ENCODE measurements at regions of chr6 and their contacts with region 1.

Region 1: GRCh38 chr6:89610149-89610642 is 28.4 kb downstream of the LYRM2 start:
- DNase-seq: peak; percentile 72 to 80
- H3K4me3 ChIP-seq: no peak overlapping the region
- H3K27ac ChIP-seq: no peak overlapping the region
- H3K4me1 ChIP-seq: no peaks in the 10 kb centered on the region
- H3K27me3 ChIP-seq: no peaks in the 10 kb centered on the region
- CTCF ChIP-seq: peak in 5 of 7 experiments; percentile 25 to 88 (median 78)
- EP300 ChIP-seq: no peak
- POLR2A ChIP-seq: no peak

Region 2: GRCh38 chr6:89323511-89323971 is 286.7 kb before region 1 on chr6:
- intact Hi-C with region 1: no loop called
- DNase-seq: no peak
- H3K4me3 ChIP-seq: no peak overlapping the region
- H3K27ac ChIP-seq: peak overlapping the region in 3 of 5 donors; percentile 23 to 36 (median 26)
- H3K4me1 ChIP-seq: peaks cover 0 to 29% (median 6%) of the 10 kb centered on the region in 4 donors
- H3K27me3 ChIP-seq: no peaks in the 10 kb centered on the region
- CTCF ChIP-seq: no peak
- EP300 ChIP-seq: no peak
- POLR2A ChIP-seq: no peak

Region 3: DNA sequence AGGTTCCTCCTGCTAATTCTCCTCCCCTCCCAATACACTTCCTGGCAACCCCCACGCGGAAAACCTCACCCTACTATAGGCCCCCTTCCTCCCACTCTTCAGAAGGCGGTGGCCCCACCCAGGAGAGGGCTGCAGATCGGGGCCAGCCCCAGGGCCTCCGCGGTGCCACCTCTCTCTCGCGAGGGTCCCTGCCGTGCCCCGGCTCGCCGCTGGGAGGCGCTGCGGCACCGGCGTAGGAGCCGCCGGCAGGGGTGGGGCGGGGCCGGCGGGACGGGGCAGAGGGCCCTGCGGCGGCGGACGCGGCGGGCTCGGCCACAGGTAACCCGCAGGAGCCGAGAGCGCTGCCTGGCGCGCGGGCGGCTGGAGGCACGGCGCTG is 177.3 kb before region 1 on chr6 and contains the start of gene ANKRD6:
- intact Hi-C with region 1: loop called (anchors 5 kb)
- DNase-seq: peak; percentile 89 to 92
- H3K4me3 ChIP-seq: peak within 1 kb of the TSS; percentile 88 to 93 (median 90)
- H3K27ac ChIP-seq: peak within 1 kb of the TSS in 2 of 5 donors; percentile 54 to 73
- H3K4me1 ChIP-seq: peaks cover 5 to 19% (median 17%) of the 10 kb centered on the region in 4 donors
- H3K27me3 ChIP-seq: no peaks in the 10 kb centered on the region
- CTCF ChIP-seq: peak in 5 of 7 experiments; percentile 56 to 98 (median 79)
- EP300 ChIP-seq: no peak
- POLR2A ChIP-seq: no peak
- total RNA-seq, gene ANKRD6: 4.2 to 145 (median 10.1) TPM

Region 4: GRCh38 chr6:89667872-89668556 is 57.8 kb after region 1 on chr6:
- intact Hi-C with region 1: no loop called
- DNase-seq: no peak
- H3K4me3 ChIP-seq: no peak overlapping the region
- H3K27ac ChIP-seq: no peak overlapping the region
- H3K4me1 ChIP-seq: no peaks in the 10 kb centered on the region
- H3K27me3 ChIP-seq: no peaks in the 10 kb centered on the region
- CTCF ChIP-seq: no peak
- EP300 ChIP-seq: no peak
- POLR2A ChIP-seq: no peak

Measured in stomach (tissue), 19 donors.